A673 (cell line): ENCODE measurements at regions of chr12 and their contacts with region 1.

Region 1: GRCh38 chr12:128069359-128069997 is 197.5 kb upstream of the TMEM132C start:
- DNase-seq: peak; percentile 50
- H3K4me3 ChIP-seq: no peak overlapping the region
- H3K27ac ChIP-seq: no peak overlapping the region
- H3K4me1 ChIP-seq: no peaks in the 10 kb centered on the region
- H3K27me3 ChIP-seq: peaks cover 5% of the 10 kb centered on the region
- CTCF ChIP-seq: peak; percentile 86

Region 2: GRCh38 chr12:127539226-127539858 is 530.1 kb before region 1 on chr12:
- CTCF ChIA-PET with region 1: no interaction called
- POLR2A ChIA-PET with region 1: no interaction called
- intact Hi-C with region 1: no loop called
- DNase-seq: no peak
- H3K4me3 ChIP-seq: no peak overlapping the region
- H3K27ac ChIP-seq: no peak overlapping the region
- H3K4me1 ChIP-seq: no peaks in the 10 kb centered on the region
- H3K27me3 ChIP-seq: no peaks in the 10 kb centered on the region
- CTCF ChIP-seq: no peak

Region 3: DNA sequence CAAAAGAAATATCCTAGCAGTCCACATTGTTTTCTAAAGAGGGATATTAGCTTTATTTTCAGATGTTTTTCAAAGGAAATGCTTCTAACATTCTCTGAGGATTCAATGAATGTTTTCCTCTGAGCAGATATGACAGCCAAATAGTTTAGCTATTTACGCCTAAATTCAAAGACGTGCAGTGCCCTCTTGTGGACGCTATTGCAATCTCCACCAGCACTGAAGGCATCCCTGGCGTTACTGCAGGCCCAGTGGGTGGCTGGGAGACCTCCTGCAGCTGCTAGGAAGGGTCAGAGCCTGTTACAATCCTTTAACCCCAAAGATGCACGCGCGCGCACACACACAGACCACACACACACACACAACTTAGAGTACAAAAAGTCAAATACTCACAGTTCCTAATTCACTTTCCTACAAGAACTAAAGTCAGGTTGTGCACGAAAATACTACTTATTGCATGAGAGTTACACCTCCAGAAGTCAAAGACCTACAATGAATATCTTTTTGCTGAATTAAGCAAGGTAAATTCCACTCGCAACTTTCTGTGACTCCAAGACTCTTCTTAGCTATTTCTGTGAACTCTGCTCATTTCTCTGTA is 391.8 kb before region 1 on chr12:
- CTCF ChIA-PET with region 1: interaction called, 6 read pairs
- POLR2A ChIA-PET with region 1: no interaction called
- intact Hi-C with region 1: loop called (anchors 5 kb)
- DNase-seq: peak; percentile 83
- H3K4me3 ChIP-seq: no peak overlapping the region
- H3K27ac ChIP-seq: no peak overlapping the region
- H3K4me1 ChIP-seq: no peaks in the 10 kb centered on the region
- H3K27me3 ChIP-seq: no peaks in the 10 kb centered on the region
- CTCF ChIP-seq: peak; percentile 91

Region 4: GRCh38 chr12:128627659-128628058 is 558.2 kb after region 1 on chr12:
- CTCF ChIA-PET with region 1: no interaction called
- POLR2A ChIA-PET with region 1: no interaction called
- intact Hi-C with region 1: no loop called
- DNase-seq: no peak
- H3K4me3 ChIP-seq: no peak overlapping the region
- H3K27ac ChIP-seq: no peak overlapping the region
- H3K4me1 ChIP-seq: no peaks in the 10 kb centered on the region
- H3K27me3 ChIP-seq: no peaks in the 10 kb centered on the region
- CTCF ChIP-seq: no peak